ENCODE measurements at regions of chrX and their contacts with region 1.

Region 1: DNA sequence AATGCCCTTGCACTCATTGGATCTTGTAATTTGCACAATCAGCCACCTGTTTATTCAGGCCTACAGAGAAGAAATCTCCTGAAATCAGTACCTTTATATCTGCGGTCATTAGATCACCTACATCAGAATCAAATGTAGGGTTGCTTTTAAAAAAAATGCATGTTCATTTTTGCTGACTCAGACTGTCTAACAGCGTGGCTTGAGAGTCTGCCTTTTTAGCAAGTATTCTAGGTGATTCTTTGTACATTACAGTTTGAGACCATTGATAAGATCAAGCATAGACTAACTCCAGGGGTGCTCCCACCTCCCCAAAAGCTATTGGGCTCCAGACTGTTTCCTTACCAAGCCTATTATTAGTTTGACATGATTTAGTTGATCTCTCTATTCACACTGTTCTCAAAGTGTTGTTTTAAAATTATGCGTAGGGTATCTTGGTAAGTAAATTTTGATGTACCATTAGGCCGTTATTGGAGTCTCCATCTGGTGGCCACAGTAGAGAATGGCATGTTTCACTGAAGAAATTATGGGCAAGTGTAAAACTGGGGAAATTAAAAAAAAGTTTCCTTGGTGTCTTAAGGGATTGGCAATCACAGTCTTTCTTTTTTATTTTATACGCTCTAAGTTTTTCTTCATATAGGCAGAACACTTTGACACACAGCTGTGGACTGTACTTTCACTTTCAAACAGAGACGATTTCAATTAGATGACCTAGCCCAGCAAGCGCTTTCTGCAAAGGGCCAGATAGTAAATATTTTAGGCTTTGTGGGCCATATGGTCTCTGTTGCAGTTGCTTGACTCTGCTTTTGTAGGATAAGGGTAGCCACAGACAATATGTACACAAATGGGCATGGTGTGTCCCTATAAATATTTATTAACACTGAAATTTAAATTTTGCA is 33.7 kb upstream of the MSL3 start:
- DNase-seq: no peak
- H3K4me3 ChIP-seq: no peak overlapping the region
- H3K27ac ChIP-seq: no peak overlapping the region
- H3K4me1 ChIP-seq: peaks cover 0 to 4% (median 0%) of the 10 kb centered on the region in 4 donors
- H3K27me3 ChIP-seq: no peaks in the 10 kb centered on the region
- CTCF ChIP-seq: peak; percentile 65 to 73 (median 70)
- EP300 ChIP-seq: no peak
- POLR2A ChIP-seq: no peak

Region 2: DNA sequence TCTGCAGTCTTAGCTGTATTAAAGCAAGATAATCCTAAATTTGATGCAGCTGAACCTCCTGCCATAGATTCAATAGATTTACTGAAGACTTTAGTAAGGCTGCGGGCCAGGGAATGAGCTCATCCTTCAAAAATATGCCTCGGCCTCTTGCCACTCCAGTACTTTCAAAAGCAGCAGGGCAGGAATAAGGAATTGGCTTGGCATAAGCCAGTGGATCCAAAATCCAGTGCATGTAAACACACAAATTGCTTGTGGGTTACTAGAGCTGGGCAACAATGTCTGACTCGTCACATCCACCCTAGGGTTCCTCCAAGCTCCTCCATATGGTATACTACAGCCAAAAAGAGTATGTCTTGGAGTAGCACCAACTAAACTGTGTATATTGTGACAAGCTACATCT is 266.2 kb before region 1 on chrX:
- intact Hi-C with region 1: no loop called
- DNase-seq: no peak
- H3K4me3 ChIP-seq: no peak overlapping the region
- H3K27ac ChIP-seq: peak overlapping the region in 2 of 4 donors; percentile 7 to 16
- H3K4me1 ChIP-seq: peaks cover 3 to 29% (median 20%) of the 10 kb centered on the region in 4 donors
- H3K27me3 ChIP-seq: no peaks in the 10 kb centered on the region
- CTCF ChIP-seq: no peak
- EP300 ChIP-seq: no peak
- POLR2A ChIP-seq: no peak

Region 3: GRCh38 chrX:11609109-11609730 is 115.2 kb before region 1 on chrX:
- intact Hi-C with region 1: no loop called
- DNase-seq: no peak
- H3K4me3 ChIP-seq: no peak overlapping the region
- H3K27ac ChIP-seq: no peak overlapping the region
- H3K4me1 ChIP-seq: no peaks in the 10 kb centered on the region
- H3K27me3 ChIP-seq: no peaks in the 10 kb centered on the region
- CTCF ChIP-seq: no peak
- EP300 ChIP-seq: no peak
- POLR2A ChIP-seq: no peak

Region 4: GRCh38 chrX:11770320-11770719 is 46.0 kb after region 1 on chrX:
- intact Hi-C with region 1: loop called (anchors 5 kb)
- DNase-seq: no peak
- H3K4me3 ChIP-seq: no peak overlapping the region
- H3K27ac ChIP-seq: no peak overlapping the region
- H3K4me1 ChIP-seq: peaks cover 0 to 4% (median 0%) of the 10 kb centered on the region in 4 donors
- H3K27me3 ChIP-seq: no peaks in the 10 kb centered on the region
- CTCF ChIP-seq: peak; percentile 72 to 83 (median 74)
- EP300 ChIP-seq: no peak
- POLR2A ChIP-seq: no peak